Sigmoid colon (tissue), 7 donors: ENCODE measurements at regions of chr15 and their contacts with region 1.

Region 1: DNA sequence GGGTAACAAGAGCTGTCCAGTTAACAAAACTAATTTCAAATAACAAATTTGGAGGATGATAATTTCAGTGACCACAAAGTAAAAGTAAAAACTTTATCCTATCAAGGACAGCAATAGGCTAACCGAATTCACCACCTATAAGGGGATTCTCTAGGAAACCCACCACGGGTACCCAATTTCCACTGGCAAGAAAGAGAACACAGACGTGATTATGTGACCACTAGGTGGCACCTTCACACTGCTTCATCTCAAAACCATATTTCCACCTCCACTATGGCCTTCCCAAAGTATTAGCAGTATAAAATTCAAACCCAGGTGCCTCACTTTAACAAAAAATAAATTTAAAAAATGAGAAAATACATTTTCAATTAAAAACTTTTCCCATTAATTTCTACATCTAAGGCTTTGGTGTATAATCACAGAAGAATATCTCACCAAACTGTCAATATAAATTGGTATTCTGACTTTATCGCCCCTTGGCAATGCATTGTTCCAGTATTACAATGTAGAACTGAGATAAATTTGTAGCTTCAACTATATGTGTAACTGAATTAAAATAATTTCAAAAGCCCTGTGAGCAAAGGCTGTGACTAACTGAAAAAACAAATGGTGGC is 96.5 kb downstream of the FSIP1 start:
- DNase-seq: no peak
- H3K4me3 ChIP-seq: no peak overlapping the region
- H3K27ac ChIP-seq: no peak overlapping the region
- H3K4me1 ChIP-seq: peaks cover 0 to 30% (median 17%) of the 10 kb centered on the region in 4 donors
- H3K27me3 ChIP-seq: no peaks in the 10 kb centered on the region
- CTCF ChIP-seq: peak; percentile 35 to 84 (median 72)
- EP300 ChIP-seq: no peak
- POLR2A ChIP-seq: no peak

Region 2: DNA sequence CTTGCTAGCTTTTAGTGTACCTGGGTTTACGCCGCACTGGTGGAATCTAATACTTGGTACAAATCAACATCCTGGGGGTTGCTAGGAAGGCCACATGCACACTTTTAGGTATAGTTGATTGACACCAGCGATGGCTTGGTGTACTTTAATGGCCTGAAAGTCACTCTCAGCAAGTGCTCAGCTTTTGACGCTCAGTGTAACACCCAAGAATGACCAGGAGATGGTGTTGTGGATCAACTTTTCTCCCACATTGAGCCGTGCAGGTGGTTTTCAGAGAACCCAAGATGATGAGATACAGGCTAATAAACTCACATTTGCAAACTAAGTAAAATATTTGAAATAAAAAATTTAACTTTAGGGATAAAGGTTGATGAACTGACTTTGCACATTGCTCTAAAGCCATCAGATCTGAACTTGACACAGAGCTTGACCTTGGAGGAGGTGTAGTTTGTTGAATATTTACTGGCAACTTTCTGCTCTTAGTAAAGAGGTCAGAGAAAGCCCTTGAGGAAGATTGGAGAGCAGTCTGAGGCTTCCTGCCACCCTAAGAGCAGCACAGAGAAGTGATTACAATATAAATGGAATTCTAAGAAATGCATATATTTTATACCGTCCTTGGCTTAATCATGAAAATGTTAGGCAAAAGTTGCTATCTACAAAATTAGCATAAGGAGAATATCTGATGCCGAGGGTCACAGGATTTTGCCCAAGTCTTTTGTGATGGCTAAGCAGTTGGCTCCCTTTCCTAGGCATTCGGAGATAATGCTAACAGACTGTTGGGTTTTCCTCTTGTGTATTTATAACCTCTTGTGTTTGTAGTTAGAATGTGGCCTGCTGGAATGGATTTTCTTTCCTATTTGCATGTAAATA is 978.1 kb before region 1 on chr15:
- intact Hi-C with region 1: loop called (anchors 5 kb)
- DNase-seq: no peak
- H3K4me3 ChIP-seq: no peak overlapping the region
- H3K27ac ChIP-seq: peak overlapping the region in 2 of 4 donors; percentile 35 to 48
- H3K4me1 ChIP-seq: peaks cover 0 to 9% (median 4%) of the 10 kb centered on the region in 4 donors
- H3K27me3 ChIP-seq: no peaks in the 10 kb centered on the region
- CTCF ChIP-seq: peak; percentile 34 to 74 (median 71)
- EP300 ChIP-seq: no peak
- POLR2A ChIP-seq: no peak

Region 3: DNA sequence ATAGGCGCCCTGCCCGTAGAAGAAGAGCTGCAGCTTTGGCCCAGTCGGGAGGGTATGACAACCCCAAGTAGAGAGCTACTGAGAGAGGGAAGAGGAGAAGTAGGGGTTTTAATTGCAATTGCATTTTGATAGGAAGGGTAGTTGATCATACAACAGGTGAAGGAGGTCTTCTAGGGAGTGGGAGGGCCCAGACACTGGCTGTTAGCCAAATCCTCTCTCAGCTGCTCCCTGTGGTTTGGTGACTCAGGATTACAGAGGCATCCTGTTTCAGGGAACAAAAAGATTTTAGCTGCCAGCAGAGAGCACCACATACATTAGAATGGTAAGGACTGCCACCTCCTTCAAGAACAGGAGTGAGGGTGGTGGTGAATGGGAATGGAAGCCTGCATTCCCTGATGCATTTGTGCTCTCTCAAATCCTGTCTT is 514.2 kb before region 1 on chr15:
- intact Hi-C with region 1: loop called (anchors 5 kb)
- DNase-seq: peak; percentile 82
- H3K4me3 ChIP-seq: no peak overlapping the region
- H3K27ac ChIP-seq: peak overlapping the region; percentile 73 to 78 (median 73)
- H3K4me1 ChIP-seq: peaks cover 0 to 39% (median 31%) of the 10 kb centered on the region in 4 donors
- H3K27me3 ChIP-seq: no peaks in the 10 kb centered on the region
- CTCF ChIP-seq: peak in 3 of 4 experiments; percentile 16 to 45 (median 22)
- EP300 ChIP-seq: no peak
- POLR2A ChIP-seq: no peak

Region 4: GRCh38 chr15:39199076-39199475 is 487.0 kb before region 1 on chr15:
- intact Hi-C with region 1: no loop called
- DNase-seq: peak; percentile 89
- H3K4me3 ChIP-seq: no peak overlapping the region
- H3K27ac ChIP-seq: peak overlapping the region in 3 of 4 donors; percentile 57 to 68 (median 67)
- H3K4me1 ChIP-seq: peaks cover 0 to 30% (median 26%) of the 10 kb centered on the region in 4 donors
- H3K27me3 ChIP-seq: no peaks in the 10 kb centered on the region
- CTCF ChIP-seq: no peak
- EP300 ChIP-seq: peak in 3 of 4 donors; percentile 16 to 23 (median 17)
- POLR2A ChIP-seq: no peak

Region 5: DNA sequence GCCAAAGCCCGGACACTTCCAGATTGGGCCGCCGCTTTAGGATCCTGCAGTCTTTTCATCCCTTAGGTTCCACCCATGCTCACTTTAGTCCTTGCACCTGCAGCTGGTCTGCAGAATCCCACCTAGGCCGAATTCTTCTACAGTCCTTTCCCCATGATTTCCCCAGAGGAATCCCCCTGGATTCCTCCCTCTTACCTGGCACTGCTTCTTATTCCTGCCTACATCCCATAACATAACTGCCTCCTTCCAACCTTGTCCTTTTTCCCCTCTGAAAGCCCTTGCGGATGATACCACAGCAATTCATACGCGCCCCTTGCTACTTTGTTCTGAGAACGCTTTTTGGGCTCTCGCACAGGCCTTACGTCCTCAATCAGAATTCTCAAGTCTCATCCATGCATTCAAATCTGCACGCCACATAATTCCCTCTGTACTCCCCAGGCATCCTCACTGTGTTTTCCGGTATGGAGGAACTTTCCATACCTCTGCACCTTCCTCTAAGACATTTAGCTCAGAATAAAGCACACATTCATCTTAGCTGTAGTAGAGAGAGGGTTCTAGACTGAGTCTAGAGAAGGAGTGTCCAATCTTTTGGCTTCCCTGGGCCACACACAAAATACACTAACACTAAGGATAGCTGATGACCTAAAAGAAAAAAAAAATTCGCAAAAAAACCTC is 248.4 kb after region 1 on chr15:
- intact Hi-C with region 1: loop called (anchors 10 kb)
- DNase-seq: no peak
- H3K4me3 ChIP-seq: peak overlapping the region; percentile 64 to 90 (median 78)
- H3K27ac ChIP-seq: peak overlapping the region; percentile 88 to 94 (median 88)
- H3K4me1 ChIP-seq: peaks cover 0 to 48% (median 15%) of the 10 kb centered on the region in 4 donors
- H3K27me3 ChIP-seq: no peaks in the 10 kb centered on the region
- CTCF ChIP-seq: no peak
- EP300 ChIP-seq: no peak
- POLR2A ChIP-seq: no peak

Region 6: GRCh38 chr15:40108855-40109735 is 423.0 kb after region 1 on chr15 and contains the start of gene BMF:
- intact Hi-C with region 1: loop called (anchors 10 kb)
- DNase-seq: peak; percentile 100
- H3K4me3 ChIP-seq: peak within 1 kb of the TSS; percentile 73 to 97 (median 90)
- H3K27ac ChIP-seq: peak within 1 kb of the TSS; percentile 85 to 98 (median 95)
- H3K4me1 ChIP-seq: peaks cover 0 to 48% (median 40%) of the 10 kb centered on the region in 4 donors
- H3K27me3 ChIP-seq: no peaks in the 10 kb centered on the region
- CTCF ChIP-seq: peak in 1 of 4 experiments; percentile 14
- EP300 ChIP-seq: peak in 1 of 4 donors; percentile 61
- POLR2A ChIP-seq: no peak
- total RNA-seq, gene BMF: 5.8 to 18.0 (median 14.8) TPM